ENCODE measurements at regions of chr3 and their contacts with region 1.

Region 1: DNA sequence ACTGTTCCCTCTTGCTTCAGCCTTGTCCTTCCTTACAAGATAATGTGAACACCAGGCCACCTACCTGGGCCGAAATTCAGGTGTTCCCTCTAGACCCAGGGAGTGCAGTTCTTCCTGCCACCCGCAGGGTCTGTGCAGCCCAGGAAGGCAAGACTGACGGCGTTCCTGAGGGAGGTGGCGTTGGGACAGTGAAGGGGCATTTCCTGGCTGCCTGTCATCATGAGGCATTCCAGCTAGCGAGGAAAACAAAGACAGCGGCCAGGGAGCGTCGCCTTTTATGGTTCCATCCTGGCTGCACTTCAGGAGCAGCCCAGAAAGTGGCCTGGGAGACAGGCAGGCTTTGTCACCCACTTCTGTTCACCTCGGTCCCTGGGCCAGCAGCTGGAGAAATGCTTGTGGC is 84.8 kb upstream of the WNT5A start:
- DNase-seq: peak in 1 of 2 experiments; percentile 87
- H3K4me3 ChIP-seq: no peak overlapping the region
- H3K27ac ChIP-seq: no peak overlapping the region
- H3K4me1 ChIP-seq: peaks cover 19% of the 10 kb centered on the region
- H3K27me3 ChIP-seq: no peaks in the 10 kb centered on the region
- CTCF ChIP-seq: no peak

Region 2: DNA sequence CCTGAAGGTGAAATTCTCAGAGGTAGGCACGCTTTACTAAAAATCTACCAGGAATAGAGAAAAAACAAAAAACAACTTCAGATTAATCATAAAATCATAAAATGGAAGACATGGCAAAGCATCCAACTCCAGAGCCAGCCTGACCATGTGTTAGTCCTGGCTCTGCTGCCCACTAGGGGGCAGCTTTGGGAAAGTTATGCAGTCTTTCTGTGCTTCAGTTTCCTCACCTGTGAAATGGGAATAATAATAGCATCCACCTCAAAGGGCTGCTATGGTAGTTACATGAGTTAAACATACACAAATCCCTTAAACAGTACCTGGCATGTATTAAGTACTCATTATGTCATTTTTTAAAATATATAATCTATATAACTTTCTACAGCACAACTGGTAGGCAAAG is 137.1 kb before region 1 on chr3:
- CTCF ChIA-PET with region 1: no interaction called
- POLR2A ChIA-PET with region 1: no interaction called
- intact Hi-C with region 1: no loop called
- DNase-seq: no peak
- H3K4me3 ChIP-seq: no peak overlapping the region
- H3K27ac ChIP-seq: no peak overlapping the region
- H3K4me1 ChIP-seq: no peaks in the 10 kb centered on the region
- H3K27me3 ChIP-seq: no peaks in the 10 kb centered on the region
- CTCF ChIP-seq: peak; percentile 53

Region 3: GRCh38 chr3:55505776-55506175 is 66.1 kb before region 1 on chr3:
- CTCF ChIA-PET with region 1: no interaction called
- POLR2A ChIA-PET with region 1: interaction called, 8 read pairs
- intact Hi-C with region 1: loop called (anchors 1 kb)
- DNase-seq: peak; percentile 44 to 66
- H3K4me3 ChIP-seq: no peak overlapping the region
- H3K27ac ChIP-seq: peak overlapping the region; percentile 29; the same call in 1 of the 2 replicates
- H3K4me1 ChIP-seq: no peaks in the 10 kb centered on the region
- H3K27me3 ChIP-seq: no peaks in the 10 kb centered on the region
- CTCF ChIP-seq: no peak

Region 4: DNA sequence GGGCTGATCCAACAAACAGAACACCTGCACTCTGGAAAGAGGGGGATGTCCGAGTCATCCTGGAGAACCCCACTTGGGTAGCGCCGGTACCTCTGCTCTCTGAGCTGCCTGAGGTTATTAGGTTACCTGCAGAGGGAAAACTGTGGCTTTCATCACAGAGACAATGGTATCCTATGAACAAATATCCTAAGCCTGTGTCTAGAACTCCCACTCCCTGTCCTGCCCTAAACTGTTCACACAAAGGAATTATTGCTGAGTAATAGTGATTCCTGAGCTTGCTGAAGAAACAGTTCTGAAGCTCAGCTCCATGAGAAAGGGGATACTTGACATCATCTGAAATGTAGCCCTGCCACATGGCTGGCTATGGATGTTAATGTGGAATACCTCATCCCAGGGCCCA is 52.9 kb before region 1 on chr3:
- CTCF ChIA-PET with region 1: interaction called, 3 read pairs
- POLR2A ChIA-PET with region 1: no interaction called
- intact Hi-C with region 1: loop called (anchors 1 kb)
- DNase-seq: peak; percentile 48 to 86
- H3K4me3 ChIP-seq: no peak overlapping the region
- H3K27ac ChIP-seq: peak overlapping the region; percentile 97
- H3K4me1 ChIP-seq: peaks cover 37% of the 10 kb centered on the region
- H3K27me3 ChIP-seq: no peaks in the 10 kb centered on the region
- CTCF ChIP-seq: no peak

Region 5: GRCh38 chr3:55591888-55592287 is 20.0 kb after region 1 on chr3:
- CTCF ChIA-PET with region 1: interaction called, 13 read pairs
- POLR2A ChIA-PET with region 1: no interaction called
- intact Hi-C with region 1: loop called (anchors 1 kb)
- DNase-seq: no peak
- H3K4me3 ChIP-seq: no peak overlapping the region
- H3K27ac ChIP-seq: peak overlapping the region; percentile 85
- H3K4me1 ChIP-seq: peaks cover 66% of the 10 kb centered on the region
- H3K27me3 ChIP-seq: no peaks in the 10 kb centered on the region
- CTCF ChIP-seq: no peak

Region 6: GRCh38 chr3:55597638-55598037 is 25.7 kb after region 1 on chr3:
- CTCF ChIA-PET with region 1: interaction called, 5 read pairs
- POLR2A ChIA-PET with region 1: no interaction called
- intact Hi-C with region 1: loop called (anchors 1 kb)
- DNase-seq: peak; percentile 67 to 99
- H3K4me3 ChIP-seq: peak overlapping the region; percentile 63; the same call in 1 of the 2 replicates
- H3K27ac ChIP-seq: peak overlapping the region; percentile 99
- H3K4me1 ChIP-seq: peaks cover 68% of the 10 kb centered on the region
- H3K27me3 ChIP-seq: no peaks in the 10 kb centered on the region
- CTCF ChIP-seq: no peak

Region 7: GRCh38 chr3:55620351-55621025 is 48.6 kb after region 1 on chr3:
- CTCF ChIA-PET with region 1: no interaction called
- POLR2A ChIA-PET with region 1: interaction called, 3 read pairs
- intact Hi-C with region 1: loop called (anchors 1 kb)
- DNase-seq: peak; percentile 79 to 95
- H3K4me3 ChIP-seq: peak overlapping the region; percentile 21; the same call in 1 of the 2 replicates
- H3K27ac ChIP-seq: peak overlapping the region; percentile 100
- H3K4me1 ChIP-seq: peaks cover 82% of the 10 kb centered on the region
- H3K27me3 ChIP-seq: no peaks in the 10 kb centered on the region
- CTCF ChIP-seq: no peak

Region 8: DNA sequence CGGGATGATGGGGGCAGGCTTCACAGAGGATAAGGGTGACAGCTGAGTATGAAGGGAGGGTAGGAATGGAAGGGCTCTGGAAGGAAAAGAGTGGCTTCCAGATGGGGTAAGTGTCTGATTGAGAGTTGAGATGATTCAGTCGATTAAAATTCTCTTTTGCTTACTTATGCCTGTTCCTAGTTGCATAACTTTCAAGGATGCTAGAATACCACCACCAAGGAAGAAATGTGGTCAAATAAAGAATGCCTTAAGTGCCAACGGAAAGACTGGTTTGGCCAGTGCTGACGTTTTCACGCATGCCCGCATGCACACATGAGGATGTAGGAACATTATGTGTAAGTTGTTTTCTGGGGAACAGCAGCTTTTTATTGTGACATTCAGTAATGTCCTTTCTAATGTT is 178.6 kb after region 1 on chr3:
- CTCF ChIA-PET with region 1: no interaction called
- POLR2A ChIA-PET with region 1: interaction called, 3 read pairs
- intact Hi-C with region 1: loop called (anchors 1 kb)
- DNase-seq: peak; percentile 75 to 97
- H3K4me3 ChIP-seq: no peak overlapping the region
- H3K27ac ChIP-seq: peak overlapping the region; percentile 74
- H3K4me1 ChIP-seq: peaks cover 20% of the 10 kb centered on the region
- H3K27me3 ChIP-seq: no peaks in the 10 kb centered on the region
- CTCF ChIP-seq: no peak